A549 (cell line): ENCODE measurements at regions of chr1 and their contacts with region 1.

Region 1: DNA sequence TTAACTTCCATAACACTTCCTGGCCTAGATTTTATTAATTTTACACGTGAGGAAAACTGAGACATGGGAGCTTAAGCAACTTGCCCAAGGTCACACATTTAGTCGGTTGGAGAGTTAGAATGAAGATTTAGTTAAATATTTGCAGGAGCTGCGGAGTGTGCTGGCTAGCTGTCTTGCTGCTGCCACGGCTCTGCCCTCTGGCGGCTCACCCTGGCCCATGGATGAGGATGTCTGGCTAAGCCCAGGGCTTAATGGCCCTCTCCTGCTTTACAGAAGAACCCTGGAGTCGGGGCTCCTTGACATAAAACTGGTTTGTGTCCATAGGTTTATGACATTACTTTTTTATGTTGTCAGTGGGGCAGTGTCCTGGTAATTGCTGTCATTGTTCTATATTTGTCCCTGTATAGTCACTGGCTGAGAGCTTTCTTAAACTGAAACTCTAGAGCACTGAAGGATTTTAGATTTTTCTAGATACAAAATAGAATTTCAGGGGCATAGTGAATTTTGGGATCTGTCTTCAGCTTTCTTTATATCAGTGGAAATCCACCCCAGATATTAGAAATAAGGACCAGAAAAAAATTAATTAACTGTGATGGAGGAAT is 88.9 kb upstream of the WLS start:
- DNase-seq: peak; percentile 55 to 61
- ATAC-seq: peak; percentile 99 to 100
- H3K4me3 ChIP-seq: no peak overlapping the region
- H3K27ac ChIP-seq: no peak overlapping the region
- H3K4me1 ChIP-seq: 0 out of 3 replicates have a peak, but pooled peaks cover 5% of the 10 kb centered on the region
- CTCF ChIP-seq: peak; percentile 69
- EP300 ChIP-seq: no peak
- POLR2A ChIP-seq: no peak
- RAD21 ChIP-seq: peak; percentile 67

Region 2: DNA sequence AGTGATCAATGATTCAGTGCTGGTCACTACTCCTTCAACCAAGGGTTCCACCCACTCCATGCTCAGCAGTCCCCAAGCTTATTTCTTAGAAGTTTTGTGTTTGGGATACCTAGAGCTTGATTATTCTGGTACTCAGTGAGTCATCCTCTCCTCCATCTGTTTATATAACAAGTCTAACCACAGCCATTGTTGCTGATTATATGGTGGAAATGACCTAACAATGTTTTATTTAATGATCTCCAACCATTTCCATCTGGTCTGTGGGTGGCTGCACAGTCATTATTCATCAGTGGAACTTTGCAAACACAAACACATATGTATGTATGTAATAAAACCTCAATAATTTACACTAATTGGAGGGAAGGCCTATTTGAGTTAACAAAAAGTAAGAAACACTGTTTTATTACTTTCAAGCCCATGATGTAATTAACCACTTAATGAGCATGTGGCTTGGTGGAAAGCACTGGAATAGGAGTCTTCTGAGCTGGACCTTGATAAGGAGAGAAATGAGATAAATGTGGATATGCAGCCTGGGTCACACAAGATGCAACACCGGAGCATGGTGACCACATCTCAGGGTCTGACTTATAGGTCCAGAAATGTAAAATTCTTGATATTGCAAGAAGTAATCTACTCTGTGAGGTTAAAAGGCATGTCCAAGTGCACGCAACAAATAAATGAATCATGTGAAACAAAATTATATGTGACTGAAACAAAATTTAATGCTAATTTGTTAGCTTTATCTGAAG is 10.1 kb after region 1 on chr1:
- CTCF ChIA-PET with region 1: interaction called, 10 read pairs
- POLR2A ChIA-PET with region 1: no interaction called
- DNase-seq: no peak
- ATAC-seq: no peak
- H3K4me3 ChIP-seq: no peak overlapping the region
- H3K27ac ChIP-seq: no peak overlapping the region
- H3K4me1 ChIP-seq: no peaks in the 10 kb centered on the region
- CTCF ChIP-seq: no peak
- EP300 ChIP-seq: no peak
- POLR2A ChIP-seq: no peak
- RAD21 ChIP-seq: no peak